A549 (cell line): ENCODE measurements at regions of chr13 and their contacts with region 1.

Region 1: GRCh38 chr13:33624740-33625139 is 193.2 kb upstream of the RFC3 start:
- DNase-seq: no peak
- ATAC-seq: no peak
- H3K4me3 ChIP-seq: no peak overlapping the region
- H3K27ac ChIP-seq: no peak overlapping the region
- H3K4me1 ChIP-seq: no peaks in the 10 kb centered on the region
- CTCF ChIP-seq: no peak
- EP300 ChIP-seq: no peak
- POLR2A ChIP-seq: no peak
- RAD21 ChIP-seq: no peak

Region 2: GRCh38 chr13:33560726-33561125 is 64.0 kb before region 1 on chr13:
- CTCF ChIA-PET with region 1: no interaction called
- POLR2A ChIA-PET with region 1: interaction called, 16 read pairs
- DNase-seq: no peak
- ATAC-seq: no peak
- H3K4me3 ChIP-seq: no peak overlapping the region
- H3K27ac ChIP-seq: no peak overlapping the region
- H3K4me1 ChIP-seq: peaks cover 8% of the 10 kb centered on the region; the same call in 2 of the 3 replicates
- CTCF ChIP-seq: no peak
- EP300 ChIP-seq: no peak
- POLR2A ChIP-seq: no peak
- RAD21 ChIP-seq: no peak

Region 3: DNA sequence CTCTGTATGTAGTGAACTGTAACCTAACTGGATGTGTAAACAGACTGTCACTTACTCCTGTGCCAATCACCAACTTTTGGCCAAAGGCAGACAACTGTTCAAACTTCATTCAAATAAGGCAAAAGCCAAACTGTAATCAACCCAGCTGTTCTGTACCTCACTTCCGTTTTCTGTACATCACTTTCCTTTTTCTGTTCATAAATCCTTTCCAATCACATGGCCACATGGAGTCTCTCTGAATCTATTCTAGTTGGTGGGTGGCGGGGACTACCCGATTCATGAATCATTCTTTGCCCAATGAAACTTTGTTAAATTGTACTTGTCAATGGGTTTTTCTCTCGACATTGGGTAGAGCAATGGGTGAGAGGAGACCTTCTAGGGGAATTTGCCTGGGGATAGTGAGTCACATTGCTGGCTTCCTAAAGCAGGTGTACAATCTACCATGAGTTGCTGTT is 14.9 kb after region 1 on chr13:
- CTCF ChIA-PET with region 1: no interaction called
- POLR2A ChIA-PET with region 1: no interaction called
- DNase-seq: no peak
- ATAC-seq: no peak
- H3K4me3 ChIP-seq: no peak overlapping the region
- H3K27ac ChIP-seq: peak overlapping the region; percentile 82 to 89; a peak in 5 of 6 replicates
- H3K4me1 ChIP-seq: peaks cover 68% of the 10 kb centered on the region
- CTCF ChIP-seq: no peak
- EP300 ChIP-seq: no peak
- POLR2A ChIP-seq: no peak
- RAD21 ChIP-seq: no peak

Region 4: DNA sequence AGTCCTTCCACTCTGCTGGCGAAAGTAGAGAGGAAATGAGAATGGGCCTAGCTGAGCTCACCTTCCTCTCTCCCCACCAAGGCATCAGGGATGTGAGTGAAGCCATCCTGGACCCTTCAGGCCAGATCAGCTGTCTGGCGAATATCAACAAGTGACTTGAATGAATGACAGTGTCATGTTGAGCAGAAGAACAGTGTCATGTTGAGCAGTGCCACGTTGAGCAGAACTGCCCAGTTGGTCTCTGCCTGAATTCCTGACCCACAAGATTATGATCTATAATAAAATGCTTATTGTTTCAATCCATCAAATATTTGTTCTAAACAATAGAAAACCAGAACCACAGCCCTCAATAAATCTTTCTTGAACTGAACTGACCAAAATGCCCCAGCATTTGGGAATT is 27.1 kb after region 1 on chr13:
- CTCF ChIA-PET with region 1: no interaction called
- POLR2A ChIA-PET with region 1: no interaction called
- DNase-seq: no peak
- ATAC-seq: no peak
- H3K4me3 ChIP-seq: no peak overlapping the region
- H3K27ac ChIP-seq: no peak overlapping the region
- H3K4me1 ChIP-seq: peaks cover 14% of the 10 kb centered on the region; the same call in 2 of the 3 replicates
- CTCF ChIP-seq: no peak
- EP300 ChIP-seq: no peak
- POLR2A ChIP-seq: no peak
- RAD21 ChIP-seq: no peak